PC-9 (cell line): ENCODE measurements at regions of chr15 and their contacts with region 1.

Region 1: DNA sequence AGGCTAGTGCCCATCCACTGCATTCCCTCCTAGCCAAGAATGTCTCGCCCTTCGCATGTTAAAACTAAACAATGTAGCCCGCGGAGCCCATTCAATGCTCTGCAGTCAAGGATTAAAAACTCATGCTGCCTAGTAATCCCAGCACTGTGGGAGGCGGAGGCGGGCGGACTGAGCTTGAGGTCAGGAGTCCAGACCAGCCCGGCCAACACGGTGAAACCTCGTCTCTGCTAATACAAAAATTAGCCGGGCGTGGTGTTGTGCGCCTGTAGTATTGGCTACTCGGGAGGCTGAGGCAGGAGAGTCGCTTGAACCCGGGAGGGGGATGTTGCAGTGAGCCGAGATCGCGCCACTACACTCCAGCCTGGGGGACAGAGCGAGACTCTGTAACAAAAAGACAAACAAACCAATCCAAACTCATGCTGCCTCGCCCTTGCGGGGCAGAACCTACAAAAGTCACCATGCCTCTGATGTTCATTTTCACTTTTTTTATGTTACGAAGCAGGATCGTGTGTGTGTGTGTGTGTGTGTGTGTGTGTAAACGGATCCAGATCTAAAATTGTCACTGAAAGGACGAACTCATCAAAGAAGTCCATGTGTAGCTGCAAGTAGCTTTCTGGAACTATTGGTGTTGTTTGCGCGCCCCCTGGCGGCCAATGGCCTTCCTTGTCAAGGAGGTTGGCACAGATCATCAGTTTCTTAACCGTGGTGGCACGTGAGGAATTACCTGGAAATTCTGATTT is 54.8 kb upstream of the SPESP1 start:
- DNase-seq: peak; percentile 70 to 83
- H3K4me3 ChIP-seq: no peak overlapping the region
- H3K27ac ChIP-seq: no peak overlapping the region
- H3K4me1 ChIP-seq: no peaks in the 10 kb centered on the region
- H3K27me3 ChIP-seq: no peaks in the 10 kb centered on the region
- CTCF ChIP-seq: peak; percentile 84

Region 2: GRCh38 chr15:68550481-68551295 is 324.9 kb before region 1 on chr15:
- CTCF ChIA-PET with region 1: interaction called, 5 read pairs
- POLR2A ChIA-PET with region 1: no interaction called
- intact Hi-C with region 1: loop called (anchors 1 kb)
- DNase-seq: peak in 1 of 2 experiments; percentile 68
- H3K4me3 ChIP-seq: no peak overlapping the region
- H3K27ac ChIP-seq: no peak overlapping the region
- H3K4me1 ChIP-seq: no peaks in the 10 kb centered on the region
- H3K27me3 ChIP-seq: peaks cover 8% of the 10 kb centered on the region; the same call in 1 of the 2 replicates
- CTCF ChIP-seq: peak; percentile 86

Region 3: DNA sequence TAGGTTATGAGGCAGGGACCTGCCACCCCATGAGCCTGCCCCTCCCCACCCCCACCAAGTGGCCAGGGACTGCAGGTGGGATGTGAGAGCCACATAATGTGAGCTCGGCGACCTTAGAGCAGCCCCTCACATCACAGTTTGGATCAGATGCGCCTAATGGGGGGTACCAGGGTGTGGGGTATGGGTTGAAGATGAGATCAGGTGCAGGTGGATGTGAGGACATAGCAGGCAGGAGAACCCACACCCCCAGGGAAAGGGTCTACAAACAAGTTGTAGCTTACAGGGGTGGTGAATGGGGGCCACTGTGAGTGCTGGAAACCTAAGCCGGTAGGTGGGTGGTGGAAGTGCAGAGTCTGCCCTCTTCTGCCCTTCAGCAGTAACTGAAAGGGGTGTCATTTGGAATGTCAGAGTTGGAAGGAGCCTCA is 202.8 kb before region 1 on chr15:
- CTCF ChIA-PET with region 1: interaction called, 24 read pairs
- POLR2A ChIA-PET with region 1: no interaction called
- intact Hi-C with region 1: loop called (anchors 5 kb)
- DNase-seq: no peak
- H3K4me3 ChIP-seq: no peak overlapping the region
- H3K27ac ChIP-seq: no peak overlapping the region
- H3K4me1 ChIP-seq: no peaks in the 10 kb centered on the region
- H3K27me3 ChIP-seq: no peaks in the 10 kb centered on the region
- CTCF ChIP-seq: 0 out of 2 replicates have a peak, but pooled peaks have one; percentile 23

Region 4: DNA sequence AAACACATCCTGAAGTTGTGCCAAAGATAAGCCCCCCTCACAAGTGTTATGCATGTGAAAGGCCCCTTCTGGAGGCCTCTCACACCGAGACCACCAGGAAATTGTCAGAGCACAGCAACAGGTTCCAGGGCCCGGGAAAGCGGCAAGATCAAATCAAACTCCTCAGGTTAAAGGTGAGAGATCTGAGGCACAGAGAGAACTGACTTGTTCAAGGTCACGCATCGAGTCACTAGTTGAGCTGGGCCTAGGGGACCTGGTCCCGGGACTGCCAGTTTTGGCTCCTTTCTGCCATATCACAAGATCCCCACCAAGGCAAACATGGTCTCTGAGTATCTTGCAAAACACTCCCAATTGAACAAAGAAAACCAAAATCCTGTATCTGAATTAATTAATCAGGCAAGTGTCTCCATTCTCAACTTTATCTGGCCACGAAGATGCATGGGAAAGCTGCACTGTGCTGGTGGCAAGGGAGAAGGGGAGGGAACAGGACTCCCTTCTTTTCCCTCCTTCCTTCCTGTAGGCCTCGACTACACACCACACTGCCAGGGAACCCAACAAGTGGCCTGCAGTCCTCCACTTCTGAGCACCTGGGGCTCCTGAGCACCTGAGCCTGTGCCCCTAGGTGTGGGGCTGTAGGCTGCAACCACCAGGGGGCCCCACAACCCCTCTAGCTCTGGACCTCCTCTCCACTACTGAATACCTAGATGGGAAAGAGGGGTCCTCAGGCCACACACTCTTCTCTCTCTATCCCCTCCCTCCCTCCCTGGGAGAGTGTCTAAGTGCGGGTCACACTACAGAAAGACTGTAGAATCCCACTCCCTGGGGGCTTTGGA is 92.1 kb before region 1 on chr15:
- CTCF ChIA-PET with region 1: interaction called, 13 read pairs
- POLR2A ChIA-PET with region 1: no interaction called
- intact Hi-C with region 1: loop called (anchors 2 kb)
- DNase-seq: peak in 1 of 2 experiments; percentile 32
- H3K4me3 ChIP-seq: no peak overlapping the region
- H3K27ac ChIP-seq: no peak overlapping the region
- H3K4me1 ChIP-seq: no peaks in the 10 kb centered on the region
- H3K27me3 ChIP-seq: no peaks in the 10 kb centered on the region
- CTCF ChIP-seq: peak; percentile 66

Region 5: DNA sequence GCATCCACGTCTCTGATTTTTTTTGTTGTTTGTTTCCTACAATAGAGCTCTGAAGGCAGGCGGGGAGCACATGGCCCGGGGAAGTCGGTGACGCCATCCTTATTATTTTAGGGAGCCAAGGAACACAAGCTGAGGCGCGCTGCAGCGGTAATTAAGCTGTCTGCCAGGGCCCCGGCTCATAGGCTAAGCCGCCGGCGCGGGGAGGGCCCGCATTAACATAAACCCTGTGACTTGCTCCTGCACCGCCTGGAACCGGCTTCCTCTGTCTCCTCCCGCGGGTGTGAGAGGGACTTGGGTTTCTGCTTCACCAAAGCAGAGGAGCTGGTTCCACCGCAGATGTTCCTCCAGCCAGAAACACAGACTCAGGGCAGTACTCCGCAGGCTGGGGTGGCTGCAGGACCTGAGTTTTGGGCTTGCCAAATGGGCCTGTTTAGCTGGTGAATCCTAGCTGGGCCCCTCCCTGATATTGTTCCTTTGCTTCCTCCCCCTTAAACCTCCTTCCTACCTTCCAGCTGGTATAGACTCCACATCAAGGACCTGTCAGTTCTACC is 80.2 kb before region 1 on chr15:
- CTCF ChIA-PET with region 1: no interaction called
- POLR2A ChIA-PET with region 1: no interaction called
- intact Hi-C with region 1: no loop called
- DNase-seq: no peak
- H3K4me3 ChIP-seq: no peak overlapping the region
- H3K27ac ChIP-seq: no peak overlapping the region
- H3K4me1 ChIP-seq: no peaks in the 10 kb centered on the region
- H3K27me3 ChIP-seq: no peaks in the 10 kb centered on the region
- CTCF ChIP-seq: no peak

Region 6: GRCh38 chr15:68862415-68862814 is 13.1 kb before region 1 on chr15:
- CTCF ChIA-PET with region 1: no interaction called
- POLR2A ChIA-PET with region 1: no interaction called
- intact Hi-C with region 1: no loop called
- DNase-seq: no peak
- H3K4me3 ChIP-seq: no peak overlapping the region
- H3K27ac ChIP-seq: no peak overlapping the region
- H3K4me1 ChIP-seq: no peaks in the 10 kb centered on the region
- H3K27me3 ChIP-seq: no peaks in the 10 kb centered on the region
- CTCF ChIP-seq: no peak

Region 7: GRCh38 chr15:68924866-68925560 is 49.5 kb after region 1 on chr15:
- CTCF ChIA-PET with region 1: interaction called, 9 read pairs
- POLR2A ChIA-PET with region 1: no interaction called
- intact Hi-C with region 1: loop called (anchors 2 kb)
- DNase-seq: peak; percentile 48 to 77
- H3K4me3 ChIP-seq: no peak overlapping the region
- H3K27ac ChIP-seq: no peak overlapping the region
- H3K4me1 ChIP-seq: no peaks in the 10 kb centered on the region
- H3K27me3 ChIP-seq: no peaks in the 10 kb centered on the region
- CTCF ChIP-seq: peak; percentile 86

Region 8: DNA sequence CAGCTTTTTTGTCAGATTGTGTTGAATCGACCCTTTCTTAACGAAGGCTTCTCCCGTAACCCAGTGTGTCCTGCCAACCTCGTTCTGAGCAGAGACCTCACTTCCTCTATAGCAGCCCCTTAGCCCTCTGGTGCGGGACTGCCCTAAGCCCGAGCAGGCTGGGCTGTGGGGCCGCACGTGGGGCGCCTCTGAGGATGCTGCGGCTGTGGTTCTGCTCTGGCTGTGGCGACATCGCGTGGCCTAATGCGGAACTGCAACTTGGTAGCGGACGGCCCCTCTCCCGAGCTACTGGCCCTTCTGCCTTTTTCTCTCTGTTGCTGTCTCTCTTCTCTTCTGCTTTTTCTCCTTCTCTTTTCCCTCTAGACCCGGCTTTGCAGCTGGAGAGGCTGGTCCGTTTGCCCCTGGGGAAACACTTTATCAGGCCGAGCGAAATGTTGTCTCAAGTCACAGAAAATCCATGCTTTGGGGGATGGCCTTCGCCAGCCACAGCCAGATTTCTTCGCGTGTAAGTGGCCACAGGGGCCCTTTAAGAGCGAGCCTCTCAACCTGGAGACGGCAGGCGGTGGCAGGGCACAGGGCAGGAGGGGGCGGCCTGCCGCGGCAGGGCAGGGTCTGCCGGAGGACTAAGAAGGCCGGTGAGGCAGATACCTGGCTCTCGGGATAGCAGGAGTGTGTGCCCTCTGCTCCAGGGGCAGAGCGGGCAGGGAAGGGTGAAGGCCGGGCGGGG is 519.2 kb after region 1 on chr15:
- CTCF ChIA-PET with region 1: no interaction called
- POLR2A ChIA-PET with region 1: no interaction called
- intact Hi-C with region 1: no loop called
- DNase-seq: peak in 1 of 2 experiments; percentile 77
- H3K4me3 ChIP-seq: no peak overlapping the region
- H3K27ac ChIP-seq: no peak overlapping the region
- H3K4me1 ChIP-seq: peaks cover 34% of the 10 kb centered on the region
- H3K27me3 ChIP-seq: no peaks in the 10 kb centered on the region
- CTCF ChIP-seq: peak; percentile 92